CD4-positive, alpha-beta T cell (primary cell): ENCODE measurements at regions of chr1 and their contacts with region 1.

Region 1: DNA sequence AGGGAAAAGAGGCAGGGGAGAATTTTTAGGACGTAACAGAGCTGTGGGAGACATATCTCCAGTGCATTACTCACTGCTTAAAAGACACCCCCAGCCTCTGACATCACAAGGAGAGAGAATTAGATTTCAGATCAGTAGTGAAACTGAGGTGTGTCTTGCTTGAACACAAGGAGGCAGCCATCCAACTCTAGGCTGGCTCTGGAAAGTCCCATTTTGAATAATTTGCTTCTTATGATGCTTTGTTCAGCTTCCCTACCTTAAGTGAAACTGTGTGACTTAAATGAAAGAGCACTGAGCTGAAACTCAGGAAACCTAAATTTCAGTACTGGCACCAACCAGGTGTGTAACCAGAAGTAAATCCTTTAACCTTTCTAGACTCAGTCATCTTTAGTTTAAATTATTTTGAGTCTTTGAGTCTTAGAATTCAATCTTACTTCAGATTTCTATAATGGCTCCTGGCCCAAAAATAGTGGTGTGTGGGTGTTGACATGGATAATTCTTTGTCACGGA is 251.6 kb upstream of the SGIP1 start:
- DNase-seq: peak in 12 of 14 experiments; percentile 17 to 92 (median 49)
- ATAC-seq: peak; percentile 95
- H3K4me3 ChIP-seq: no peak overlapping the region
- H3K4me3 Mint-ChIP-seq: peak overlapping the region; percentile 45
- H3K27ac ChIP-seq: peak overlapping the region; percentile 5 to 67
- H3K27ac Mint-ChIP-seq: peak overlapping the region; percentile 88
- H3K4me1 ChIP-seq: peaks cover 54% of the 10 kb centered on the region
- H3K4me1 Mint-ChIP-seq: peaks cover 91% of the 10 kb centered on the region
- H3K27me3 ChIP-seq: no peaks in the 10 kb centered on the region
- H3K27me3 Mint-ChIP-seq: no peaks in the 10 kb centered on the region
- CTCF ChIP-seq: no peak

Region 2: DNA sequence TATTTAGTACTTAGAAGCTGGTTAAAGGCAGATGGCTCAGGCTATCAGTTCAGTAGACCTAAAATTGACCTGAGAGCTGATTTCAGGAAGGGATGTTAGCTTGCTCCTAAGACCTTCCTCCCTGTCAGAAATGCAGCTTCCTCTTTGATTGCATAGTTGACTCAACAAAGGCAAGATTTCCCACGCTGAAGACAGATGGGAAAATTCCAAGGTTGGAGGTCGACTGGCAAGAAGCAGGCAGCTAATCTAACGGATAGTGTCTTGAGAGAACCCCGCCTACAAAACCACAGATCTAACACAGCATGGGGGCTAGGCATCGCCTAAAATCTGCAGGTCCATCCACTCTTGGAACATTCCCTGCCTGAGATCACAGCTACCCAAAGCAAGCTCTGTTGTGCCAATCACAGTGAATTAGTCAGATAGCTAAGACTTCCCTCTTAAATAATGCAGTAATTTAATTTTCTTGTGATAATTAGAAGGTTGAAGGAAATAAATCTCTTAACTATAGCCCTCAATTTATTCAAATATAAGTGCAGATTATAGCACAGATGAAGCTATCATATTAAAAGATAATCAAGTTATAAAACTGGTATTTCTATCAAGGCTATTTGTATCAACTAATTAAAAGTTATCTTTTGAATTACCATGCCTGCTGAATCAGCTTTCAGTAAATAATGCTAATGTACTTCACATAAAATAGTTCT is 106.2 kb before region 1 on chr1:
- CTCF ChIA-PET with region 1: no interaction called
- POLR2A ChIA-PET with region 1: no interaction called
- intact Hi-C with region 1: no loop called
- DNase-seq: no peak
- ATAC-seq: no peak
- H3K4me3 ChIP-seq: no peak overlapping the region
- H3K4me3 Mint-ChIP-seq: no peak overlapping the region
- H3K27ac ChIP-seq: no peak overlapping the region
- H3K27ac Mint-ChIP-seq: no peak overlapping the region
- H3K4me1 ChIP-seq: no peaks in the 10 kb centered on the region
- H3K4me1 Mint-ChIP-seq: peaks cover under 1% of the 10 kb centered on the region
- H3K27me3 ChIP-seq: peaks cover 0 to 8% of the 10 kb centered on the region in 2 experiments
- H3K27me3 Mint-ChIP-seq: no peaks in the 10 kb centered on the region
- CTCF ChIP-seq: no peak

Region 3: DNA sequence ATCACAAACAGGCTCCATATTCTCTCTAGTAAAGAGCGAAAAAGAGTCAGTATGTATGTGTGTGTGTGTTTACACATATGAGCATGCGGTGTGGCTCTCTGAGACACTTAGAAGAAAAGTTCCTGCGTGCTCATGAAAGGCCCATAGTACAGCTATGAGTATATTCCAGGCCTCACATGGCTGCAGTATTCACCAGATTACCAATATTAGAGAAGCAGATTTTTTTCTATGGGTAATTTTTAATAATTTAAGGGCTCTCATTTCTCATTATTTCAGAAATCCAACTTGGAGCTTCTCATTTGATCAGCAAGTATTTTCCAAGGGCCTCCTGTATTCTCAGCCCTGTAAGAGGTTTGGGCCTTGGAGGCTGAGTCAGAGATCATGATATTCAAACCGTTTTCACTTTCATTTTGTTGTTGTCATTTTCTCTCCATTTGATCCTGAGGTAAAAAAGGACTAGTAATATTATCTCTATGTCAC is 18.6 kb after region 1 on chr1:
- CTCF ChIA-PET with region 1: interaction called, 16 read pairs
- POLR2A ChIA-PET with region 1: interaction called, 5 read pairs
- intact Hi-C with region 1: no loop called
- DNase-seq: peak in 7 of 14 experiments; percentile 9 to 78 (median 42)
- ATAC-seq: peak; percentile 87
- H3K4me3 ChIP-seq: peak overlapping the region; percentile 29
- H3K4me3 Mint-ChIP-seq: peak overlapping the region; percentile 68
- H3K27ac ChIP-seq: peak overlapping the region; percentile 33 to 61
- H3K27ac Mint-ChIP-seq: peak overlapping the region; percentile 84
- H3K4me1 ChIP-seq: peaks cover 31% of the 10 kb centered on the region
- H3K4me1 Mint-ChIP-seq: peaks cover 40% of the 10 kb centered on the region
- H3K27me3 ChIP-seq: no peaks in the 10 kb centered on the region
- H3K27me3 Mint-ChIP-seq: no peaks in the 10 kb centered on the region
- CTCF ChIP-seq: no peak

Region 4: GRCh38 chr1:66339944-66340343 is 57.5 kb after region 1 on chr1:
- CTCF ChIA-PET with region 1: interaction called, 23 read pairs
- POLR2A ChIA-PET with region 1: interaction called, 38 read pairs
- intact Hi-C with region 1: loop called in 1 of 2 experiments (anchors 1 kb)
- DNase-seq: peak in 3 of 14 experiments; percentile 14 to 54 (median 34)
- ATAC-seq: no peak
- H3K4me3 ChIP-seq: peak overlapping the region; percentile 12
- H3K4me3 Mint-ChIP-seq: peak overlapping the region; percentile 67
- H3K27ac ChIP-seq: no peak overlapping the region
- H3K27ac Mint-ChIP-seq: peak overlapping the region; percentile 72
- H3K4me1 ChIP-seq: peaks cover 45% of the 10 kb centered on the region
- H3K4me1 Mint-ChIP-seq: peaks cover 85% of the 10 kb centered on the region
- H3K27me3 ChIP-seq: no peaks in the 10 kb centered on the region
- H3K27me3 Mint-ChIP-seq: no peaks in the 10 kb centered on the region
- CTCF ChIP-seq: no peak

Region 5: GRCh38 chr1:66350001-66350547 is 67.7 kb after region 1 on chr1:
- CTCF ChIA-PET with region 1: interaction called, 23 read pairs
- POLR2A ChIA-PET with region 1: interaction called, 6 read pairs
- intact Hi-C with region 1: loop called in 1 of 2 experiments (anchors 5 kb)
- DNase-seq: peak in 11 of 14 experiments; percentile 36 to 88 (median 63)
- ATAC-seq: peak; percentile 72
- H3K4me3 ChIP-seq: peak overlapping the region; percentile 8
- H3K4me3 Mint-ChIP-seq: peak overlapping the region; percentile 84
- H3K27ac ChIP-seq: peak overlapping the region; percentile 65 to 77
- H3K27ac Mint-ChIP-seq: peak overlapping the region; percentile 87
- H3K4me1 ChIP-seq: peaks cover 52% of the 10 kb centered on the region
- H3K4me1 Mint-ChIP-seq: peaks cover 96% of the 10 kb centered on the region
- H3K27me3 ChIP-seq: no peaks in the 10 kb centered on the region
- H3K27me3 Mint-ChIP-seq: no peaks in the 10 kb centered on the region
- CTCF ChIP-seq: no peak

Region 6: GRCh38 chr1:66436378-66437145 is 154.2 kb after region 1 on chr1:
- CTCF ChIA-PET with region 1: interaction called, 13 read pairs
- POLR2A ChIA-PET with region 1: no interaction called
- intact Hi-C with region 1: loop called in 1 of 2 experiments (anchors 2 kb)
- DNase-seq: peak in 10 of 14 experiments; percentile 6 to 68 (median 22)
- ATAC-seq: peak; percentile 94
- H3K4me3 ChIP-seq: no peak overlapping the region
- H3K4me3 Mint-ChIP-seq: no peak overlapping the region
- H3K27ac ChIP-seq: no peak overlapping the region
- H3K27ac Mint-ChIP-seq: no peak overlapping the region
- H3K4me1 ChIP-seq: peaks cover 7% of the 10 kb centered on the region
- H3K4me1 Mint-ChIP-seq: peaks cover 9% of the 10 kb centered on the region
- H3K27me3 ChIP-seq: no peaks in the 10 kb centered on the region
- H3K27me3 Mint-ChIP-seq: no peaks in the 10 kb centered on the region
- CTCF ChIP-seq: peak; percentile 18